Activated B cell treated with CpG ODN at 0.5 μM for 24 hours (primary cell): ENCODE measurements at regions of chr21 and their contacts with region 1.

Region 1: GRCh38 chr21:29298348-29299045 is at the start of gene BACH1:
- DNase-seq: peak; percentile 86
- ATAC-seq: peak; percentile 51
- H3K4me3 Mint-ChIP-seq: peak within 1 kb of the TSS; percentile 97
- H3K27ac Mint-ChIP-seq: peak within 1 kb of the TSS; percentile 99
- H3K4me1 Mint-ChIP-seq: peaks cover 74% of the 10 kb centered on the region
- H3K27me3 Mint-ChIP-seq: no peaks in the 10 kb centered on the region
- CTCF ChIP-seq: no peak
- total RNA-seq, gene BACH1: 141 and 152 TPM in 2 replicates

Region 2: DNA sequence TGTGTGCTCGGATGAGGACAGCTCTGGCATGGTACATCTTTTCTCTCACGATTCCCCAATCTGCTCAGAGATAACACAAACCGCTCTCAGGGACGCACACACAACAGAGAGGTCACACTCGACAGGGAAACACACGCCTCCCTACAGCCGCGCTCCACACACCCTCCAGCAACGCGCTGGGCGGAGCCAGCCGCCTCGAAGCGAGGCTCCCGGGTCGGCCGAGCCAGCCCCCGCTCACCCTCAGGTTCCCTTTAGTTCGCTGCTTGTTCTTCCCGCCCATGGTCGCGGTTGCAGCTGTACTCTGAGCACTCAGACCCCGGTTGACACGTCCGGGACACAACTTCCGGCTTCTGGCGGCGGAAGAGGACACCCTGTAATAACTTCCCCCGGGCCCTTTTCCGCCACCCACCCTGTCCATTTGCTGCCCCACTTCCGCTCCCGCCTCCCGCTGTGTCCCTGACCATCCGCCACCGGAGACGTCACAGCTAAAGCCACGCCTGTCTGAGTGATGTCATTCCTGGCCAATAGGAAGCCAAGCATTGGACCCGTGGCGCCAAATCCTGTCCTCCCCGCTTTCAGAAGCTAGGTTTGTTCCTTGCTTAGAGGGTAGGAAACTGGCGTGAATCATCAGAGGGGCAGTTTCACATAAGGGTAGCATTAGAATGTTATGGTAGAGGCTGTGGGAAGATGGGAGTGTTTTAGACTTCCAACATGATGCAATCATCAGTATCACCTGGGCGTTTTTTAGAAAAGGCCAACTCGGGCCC is 305.8 kb before region 1 on chr21 and contains the start of gene LTN1:
- CTCF ChIA-PET with region 1: no interaction called
- POLR2A ChIA-PET with region 1: interaction called, 4 read pairs
- intact Hi-C with region 1: loop called (anchors 2 kb)
- DNase-seq: peak; percentile 95
- ATAC-seq: peak; percentile 95
- H3K4me3 Mint-ChIP-seq: peak within 1 kb of the TSS; percentile 96
- H3K27ac Mint-ChIP-seq: peak within 1 kb of the TSS; percentile 94
- H3K4me1 Mint-ChIP-seq: peaks cover 39% of the 10 kb centered on the region
- H3K27me3 Mint-ChIP-seq: no peaks in the 10 kb centered on the region
- CTCF ChIP-seq: no peak
- total RNA-seq, gene LTN1: 22.5 and 25.8 TPM in 2 replicates

Region 3: DNA sequence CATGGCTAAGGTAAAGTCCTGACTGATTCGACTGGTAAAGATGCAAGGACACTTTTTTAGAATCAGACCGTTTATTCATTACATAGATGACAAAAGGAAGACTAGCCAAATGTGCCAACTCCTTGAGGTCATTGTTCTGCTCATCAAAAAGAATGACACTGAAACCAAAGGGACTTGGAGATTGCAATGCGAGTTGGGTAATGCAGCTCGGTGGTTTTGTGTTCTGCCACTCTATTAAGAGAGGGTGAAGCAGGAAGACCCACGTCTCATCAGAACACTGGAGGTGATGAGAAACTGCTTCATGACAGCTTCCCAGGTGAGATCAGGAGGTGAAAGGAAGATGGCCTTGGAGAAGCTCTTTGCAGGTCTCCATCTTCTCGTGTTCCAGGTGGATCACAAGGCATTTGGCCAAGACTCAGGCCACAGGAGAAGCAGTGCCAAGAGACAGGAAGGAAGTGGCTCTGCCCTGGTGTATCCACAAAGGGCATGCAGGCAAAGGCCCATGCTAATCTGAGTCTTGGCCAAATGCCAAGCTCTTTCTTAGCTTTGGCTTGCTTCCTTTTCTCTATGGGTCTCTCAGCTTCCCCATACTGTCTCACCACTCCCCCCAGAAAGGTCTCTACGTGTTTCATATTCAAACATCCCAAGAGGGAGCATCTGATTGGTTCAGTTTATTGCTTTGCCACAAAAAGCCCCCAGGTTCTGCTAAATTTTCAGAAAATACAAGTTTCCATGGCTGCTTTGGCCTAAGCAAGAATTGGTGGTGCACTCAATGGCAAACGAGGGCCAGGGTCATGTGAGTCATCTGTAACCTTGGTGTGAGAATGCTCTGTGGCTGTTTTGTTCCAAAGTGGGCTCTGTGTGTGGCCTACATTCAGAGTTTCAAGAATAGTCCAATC is 219.4 kb before region 1 on chr21:
- CTCF ChIA-PET with region 1: no interaction called
- POLR2A ChIA-PET with region 1: interaction called, 91 read pairs
- intact Hi-C with region 1: loop called (anchors 1 kb)
- DNase-seq: peak; percentile 18
- ATAC-seq: peak; percentile 51
- H3K4me3 Mint-ChIP-seq: peak overlapping the region; percentile 28
- H3K27ac Mint-ChIP-seq: peak overlapping the region; percentile 82
- H3K4me1 Mint-ChIP-seq: peaks cover 49% of the 10 kb centered on the region
- H3K27me3 Mint-ChIP-seq: no peaks in the 10 kb centered on the region
- CTCF ChIP-seq: no peak

Region 4: GRCh38 chr21:29164325-29164942 is 134.1 kb before region 1 on chr21:
- CTCF ChIA-PET with region 1: interaction called, 8 read pairs
- POLR2A ChIA-PET with region 1: interaction called, 12 read pairs
- intact Hi-C with region 1: loop called (anchors 1 kb)
- DNase-seq: no peak
- ATAC-seq: peak; percentile 57
- H3K4me3 Mint-ChIP-seq: no peak overlapping the region
- H3K27ac Mint-ChIP-seq: no peak overlapping the region
- H3K4me1 Mint-ChIP-seq: peaks cover 7% of the 10 kb centered on the region
- H3K27me3 Mint-ChIP-seq: no peaks in the 10 kb centered on the region
- CTCF ChIP-seq: no peak

Region 5: DNA sequence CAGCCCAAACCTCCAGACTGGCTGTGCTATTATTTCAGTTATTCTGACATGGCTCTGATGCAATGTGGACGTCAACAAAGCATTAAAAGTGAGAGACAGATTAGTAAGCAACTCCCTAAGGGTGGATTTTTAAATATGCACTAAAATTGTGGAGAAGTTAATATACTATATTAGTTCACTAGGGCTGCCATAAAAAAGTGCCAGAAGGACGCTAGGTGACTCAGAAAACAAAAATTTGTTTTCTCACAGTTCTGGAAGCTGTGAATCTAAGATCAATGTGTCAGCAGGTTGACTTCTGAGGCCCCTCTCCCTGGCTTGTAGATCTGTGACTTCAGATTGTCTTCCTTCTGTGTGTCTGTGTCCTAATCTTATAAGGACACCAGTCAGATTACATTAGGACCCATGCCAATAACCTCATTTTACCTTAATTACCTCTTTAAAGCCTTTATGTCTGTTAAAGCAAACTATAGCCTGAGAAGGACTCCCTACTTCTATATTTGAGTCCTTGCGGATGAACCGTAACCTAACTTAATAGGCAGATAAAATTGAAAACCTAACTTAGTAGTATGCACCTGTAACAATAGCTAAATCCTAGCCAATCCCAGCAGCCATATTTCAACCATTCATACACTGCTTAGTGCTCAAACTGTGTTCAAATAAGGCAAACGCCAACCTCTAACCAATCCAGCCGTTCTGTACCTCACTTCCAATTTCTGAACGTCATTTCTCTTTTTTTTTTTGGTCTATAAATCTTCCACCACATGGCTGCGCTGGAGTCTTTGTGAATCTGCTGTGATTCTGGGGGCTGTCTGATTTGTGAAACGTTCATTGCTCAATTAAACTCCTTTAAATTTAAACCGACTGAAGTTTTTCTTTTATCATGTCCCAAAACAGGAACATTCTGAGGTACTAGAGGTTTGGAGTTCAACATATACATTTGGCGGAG is 65.6 kb before region 1 on chr21:
- CTCF ChIA-PET with region 1: interaction called, 27 read pairs
- POLR2A ChIA-PET with region 1: interaction called, 137 read pairs
- intact Hi-C with region 1: loop called (anchors 1 kb)
- DNase-seq: no peak
- ATAC-seq: peak; percentile 42
- H3K4me3 Mint-ChIP-seq: peak overlapping the region; percentile 72
- H3K27ac Mint-ChIP-seq: peak overlapping the region; percentile 96
- H3K4me1 Mint-ChIP-seq: peaks cover 78% of the 10 kb centered on the region
- H3K27me3 Mint-ChIP-seq: no peaks in the 10 kb centered on the region
- CTCF ChIP-seq: no peak

Region 6: DNA sequence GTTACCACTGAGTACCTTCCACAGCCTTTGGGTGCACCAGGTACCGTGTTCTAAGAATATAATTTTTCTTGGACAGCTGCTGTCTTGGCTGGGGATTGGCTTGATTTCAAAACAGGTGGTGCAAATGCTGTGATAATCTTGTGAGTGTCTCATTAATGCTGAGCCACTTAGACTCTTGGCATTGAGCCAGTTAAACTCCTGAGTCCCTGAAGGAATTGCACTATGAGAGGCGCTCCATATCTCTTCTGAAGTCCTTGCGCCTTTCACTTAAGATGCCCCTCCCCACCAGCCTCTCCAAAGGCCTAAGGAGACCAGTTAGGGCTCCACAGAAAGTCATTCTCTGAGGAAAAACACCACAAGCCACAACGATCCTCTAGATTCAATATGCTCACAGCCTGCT is 51.2 kb after region 1 on chr21:
- CTCF ChIA-PET with region 1: interaction called, 4 read pairs
- POLR2A ChIA-PET with region 1: interaction called, 27 read pairs
- intact Hi-C with region 1: loop called (anchors 1 kb)
- DNase-seq: no peak
- ATAC-seq: no peak
- H3K4me3 Mint-ChIP-seq: no peak overlapping the region
- H3K27ac Mint-ChIP-seq: peak overlapping the region; percentile 33
- H3K4me1 Mint-ChIP-seq: peaks cover 26% of the 10 kb centered on the region
- H3K27me3 Mint-ChIP-seq: no peaks in the 10 kb centered on the region
- CTCF ChIP-seq: no peak

Region 7: DNA sequence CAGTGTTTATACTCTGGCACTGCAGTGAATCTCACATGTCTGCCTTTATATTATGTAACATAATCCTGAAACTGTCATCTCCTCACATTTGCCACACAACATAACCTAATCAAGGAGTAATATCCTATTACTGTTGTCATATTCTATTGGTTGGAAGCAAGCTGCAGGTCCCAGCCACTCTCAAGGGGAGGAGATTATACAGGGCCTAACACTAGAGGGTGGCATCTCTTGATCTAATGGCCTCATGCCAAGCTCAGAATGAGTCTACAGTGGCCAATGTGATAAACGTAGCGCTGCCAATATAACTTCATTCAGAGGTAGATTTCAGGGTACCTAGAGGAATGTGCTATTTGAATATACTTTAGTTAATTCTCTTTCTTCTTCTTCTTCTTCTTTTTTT is 167.0 kb after region 1 on chr21:
- CTCF ChIA-PET with region 1: no interaction called
- POLR2A ChIA-PET with region 1: no interaction called
- intact Hi-C with region 1: no loop called
- DNase-seq: no peak
- ATAC-seq: no peak
- H3K4me3 Mint-ChIP-seq: no peak overlapping the region
- H3K27ac Mint-ChIP-seq: no peak overlapping the region
- H3K4me1 Mint-ChIP-seq: peaks cover 3% of the 10 kb centered on the region
- H3K27me3 Mint-ChIP-seq: no peaks in the 10 kb centered on the region
- CTCF ChIP-seq: no peak